ENCODE measurements at regions of chr14 and their contacts with region 1.

Region 1: DNA sequence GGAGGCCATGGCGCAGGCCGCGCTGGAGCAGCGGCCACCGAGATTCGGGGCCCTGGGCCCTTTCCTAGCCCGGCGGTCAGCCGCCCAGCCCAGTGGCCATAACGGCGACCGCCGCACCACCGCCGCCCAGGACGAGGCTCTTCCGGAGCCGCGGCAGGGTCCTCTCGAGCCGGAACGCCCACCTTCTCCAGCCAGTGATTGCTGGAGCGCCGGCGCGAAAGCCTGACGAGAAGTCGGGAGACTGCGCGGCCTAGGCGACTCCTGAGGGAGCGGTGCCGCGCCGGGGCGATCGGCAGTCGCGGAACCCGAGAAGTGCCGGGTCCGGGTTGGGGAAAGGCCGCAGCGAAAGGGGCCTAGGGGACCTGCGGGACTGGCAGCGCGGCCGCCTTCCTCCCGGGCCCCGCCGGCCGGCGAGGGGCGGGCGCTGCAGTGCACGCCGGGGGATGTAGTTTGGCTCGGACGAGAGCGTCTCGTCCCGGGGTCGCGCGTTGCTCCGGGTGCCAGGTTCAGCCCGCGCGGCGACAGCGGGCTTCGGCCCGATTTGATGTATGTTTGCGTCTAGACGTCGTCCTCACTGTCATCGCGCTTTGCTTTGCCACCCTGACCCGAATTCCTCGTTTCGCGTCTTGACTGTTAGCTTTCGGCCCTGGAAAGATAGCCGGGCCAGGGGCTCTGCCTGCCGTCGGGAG is at the start of gene VTI1B:
- DNase-seq: peak; percentile 80
- H3K4me3 ChIP-seq: peak within 1 kb of the TSS; percentile 90 to 99 (median 96)
- H3K27ac ChIP-seq: peak within 1 kb of the TSS; percentile 94 to 99 (median 96)
- H3K4me1 ChIP-seq: peaks cover 0 to 42% (median 31%) of the 10 kb centered on the region in 4 donors
- H3K27me3 ChIP-seq: no peaks in the 10 kb centered on the region
- CTCF ChIP-seq: peak in 1 of 4 experiments; percentile 7
- EP300 ChIP-seq: no peak
- POLR2A ChIP-seq: peak; percentile 36 to 49
- total RNA-seq, gene VTI1B: 58.6 to 114 (median 97.7) TPM

Region 2: GRCh38 chr14:67599698-67600561 is 74.7 kb before region 1 on chr14 and contains the start of gene PIGH:
- intact Hi-C with region 1: loop called (anchors 5 kb)
- DNase-seq: peak; percentile 94
- H3K4me3 ChIP-seq: peak within 1 kb of the TSS; percentile 77 to 96 (median 90)
- H3K27ac ChIP-seq: peak within 1 kb of the TSS; percentile 88 to 96 (median 94)
- H3K4me1 ChIP-seq: peaks cover 0 to 17% (median 8%) of the 10 kb centered on the region in 4 donors
- H3K27me3 ChIP-seq: no peaks in the 10 kb centered on the region
- CTCF ChIP-seq: peak; percentile 35 to 56 (median 46)
- EP300 ChIP-seq: no peak
- POLR2A ChIP-seq: peak; percentile 56 to 80
- total RNA-seq, gene PIGH: 15.2 to 32.9 (median 24.4) TPM

Region 3: GRCh38 chr14:67619446-67620216 is 55.0 kb before region 1 on chr14 and contains the start of gene ARG2:
- intact Hi-C with region 1: loop called (anchors 2 kb)
- DNase-seq: peak; percentile 98
- H3K4me3 ChIP-seq: peak within 1 kb of the TSS; percentile 46 to 64 (median 60)
- H3K27ac ChIP-seq: peak within 1 kb of the TSS; percentile 75 to 80 (median 78)
- H3K4me1 ChIP-seq: peaks cover 0 to 45% (median 40%) of the 10 kb centered on the region in 4 donors
- H3K27me3 ChIP-seq: no peaks in the 10 kb centered on the region
- CTCF ChIP-seq: no peak
- EP300 ChIP-seq: peak in 1 of 4 donors; percentile 43
- POLR2A ChIP-seq: peak; percentile 42 to 60
- total RNA-seq, gene ARG2: 1.6 to 11.4 (median 5.5) TPM

Region 4: DNA sequence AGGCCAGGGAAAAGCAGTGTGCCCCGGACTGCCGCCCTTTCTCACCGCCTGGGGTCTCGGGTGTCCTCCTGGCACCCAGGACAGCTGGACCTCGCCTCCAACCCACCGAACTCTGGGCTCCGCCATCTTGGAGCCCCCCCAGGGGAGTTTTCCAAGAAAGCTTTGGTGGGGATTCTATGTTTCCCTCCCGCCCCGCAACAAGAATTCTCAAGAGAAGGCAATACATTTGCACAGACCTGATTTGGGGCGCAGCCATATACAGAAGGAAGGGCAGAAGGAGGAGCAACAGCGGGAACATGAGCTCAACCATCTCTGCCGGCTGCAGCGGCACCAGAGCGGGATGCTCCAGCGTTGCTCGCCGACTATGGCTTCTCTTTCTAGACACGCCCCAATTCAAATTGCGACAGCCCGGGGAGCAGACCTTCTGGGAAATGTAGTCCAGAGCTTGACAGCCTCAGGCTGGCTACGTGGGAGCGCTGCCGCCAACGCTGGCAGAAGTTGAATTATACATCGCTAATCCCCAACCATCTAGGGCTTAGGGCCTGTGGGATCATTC is 20.8 kb after region 1 on chr14 and contains the start of gene RDH11:
- intact Hi-C with region 1: loop called (anchors 1 kb)
- DNase-seq: peak; percentile 93
- H3K4me3 ChIP-seq: peak within 1 kb of the TSS; percentile 85 to 95 (median 89)
- H3K27ac ChIP-seq: peak within 1 kb of the TSS; percentile 81 to 90 (median 86)
- H3K4me1 ChIP-seq: peaks cover 4 to 23% (median 17%) of the 10 kb centered on the region in 4 donors
- H3K27me3 ChIP-seq: no peaks in the 10 kb centered on the region
- CTCF ChIP-seq: no peak
- EP300 ChIP-seq: no peak
- POLR2A ChIP-seq: peak; percentile 90 to 91
- total RNA-seq, gene RDH11: 24.7 to 49.0 (median 38.5) TPM

Measured in sigmoid colon (tissue), 7 donors.